ENCODE measurements at regions of chr14 and their contacts with region 1.

Region 1: GRCh38 chr14:34043627-34044372 is 92.9 kb upstream of the EGLN3 start:
- DNase-seq: peak; percentile 99
- ATAC-seq: peak; percentile 90
- H3K4me3 ChIP-seq: no peak overlapping the region
- H3K27ac ChIP-seq: peak overlapping the region; percentile 62
- H3K4me1 ChIP-seq: peaks cover 75% of the 10 kb centered on the region
- H3K27me3 ChIP-seq: no peaks in the 10 kb centered on the region
- CTCF ChIP-seq: peak; percentile 38; the same call in 1 of the 2 replicates
- EP300 ChIP-seq: peak in 1 of 2 experiments; percentile 98; a peak in 3 of 4 replicates
- POLR2A ChIP-seq: peak in 1 of 2 experiments; percentile 73; a peak in 1 of 4 replicates
- RAD21 ChIP-seq: no peak

Region 2: GRCh38 chr14:33457021-33457420 is 586.8 kb before region 1 on chr14:
- CTCF ChIA-PET with region 1: no interaction called
- POLR2A ChIA-PET with region 1: no interaction called
- in situ Hi-C with region 1: no loop called
- intact Hi-C with region 1: no loop called
- DNase-seq: no peak
- ATAC-seq: no peak
- H3K4me3 ChIP-seq: no peak overlapping the region
- H3K27ac ChIP-seq: no peak overlapping the region
- H3K4me1 ChIP-seq: no peaks in the 10 kb centered on the region
- H3K27me3 ChIP-seq: peaks cover 0 to 2% of the 10 kb centered on the region in 2 experiments; a peak in 1 of 5 replicates
- CTCF ChIP-seq: no peak
- EP300 ChIP-seq: no peak
- POLR2A ChIP-seq: no peak
- RAD21 ChIP-seq: no peak

Region 3: DNA sequence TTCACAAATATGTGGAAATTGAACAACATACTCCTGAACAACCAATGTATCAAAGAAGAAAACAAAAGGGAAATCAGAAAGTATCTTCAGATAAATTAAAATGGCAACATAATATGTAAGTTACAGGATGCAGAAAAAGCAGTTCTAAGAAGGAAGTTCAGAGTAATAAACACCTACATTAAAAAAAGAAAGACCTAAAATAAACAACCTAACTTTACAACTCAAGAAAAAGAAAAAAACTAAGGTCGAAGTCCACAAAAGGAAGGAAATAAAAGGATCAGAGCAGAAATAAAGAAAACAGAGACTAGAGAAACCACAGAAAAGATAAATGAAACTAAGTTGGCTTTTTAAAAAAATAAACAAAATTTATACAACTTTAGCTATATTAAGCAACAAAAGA is 152.1 kb before region 1 on chr14:
- CTCF ChIA-PET with region 1: no interaction called
- POLR2A ChIA-PET with region 1: no interaction called
- in situ Hi-C with region 1: no loop called
- intact Hi-C with region 1: no loop called
- DNase-seq: no peak
- ATAC-seq: no peak
- H3K4me3 ChIP-seq: no peak overlapping the region
- H3K27ac ChIP-seq: no peak overlapping the region
- H3K4me1 ChIP-seq: no peaks in the 10 kb centered on the region
- H3K27me3 ChIP-seq: no peaks in the 10 kb centered on the region
- CTCF ChIP-seq: no peak
- EP300 ChIP-seq: no peak
- POLR2A ChIP-seq: no peak
- RAD21 ChIP-seq: no peak

Region 4: GRCh38 chr14:34059855-34060638 is 16.2 kb after region 1 on chr14:
- CTCF ChIA-PET with region 1: no interaction called
- POLR2A ChIA-PET with region 1: interaction called, 13 read pairs
- in situ Hi-C with region 1: no loop called
- intact Hi-C with region 1: no loop called
- DNase-seq: peak; percentile 56
- ATAC-seq: peak; percentile 96
- H3K4me3 ChIP-seq: peak overlapping the region; percentile 28 to 66 (median 41); a peak in 5 of 6 replicates
- H3K27ac ChIP-seq: peak overlapping the region; percentile 26
- H3K4me1 ChIP-seq: peaks cover 71% of the 10 kb centered on the region
- H3K27me3 ChIP-seq: no peaks in the 10 kb centered on the region; a peak in 2 of 5 replicates
- CTCF ChIP-seq: peak; percentile 75
- EP300 ChIP-seq: peak; percentile 22 to 64; a peak in 2 of 4 replicates
- POLR2A ChIP-seq: peak in 1 of 2 experiments; percentile 67; a peak in 2 of 4 replicates
- RAD21 ChIP-seq: peak; percentile 77

Region 5: DNA sequence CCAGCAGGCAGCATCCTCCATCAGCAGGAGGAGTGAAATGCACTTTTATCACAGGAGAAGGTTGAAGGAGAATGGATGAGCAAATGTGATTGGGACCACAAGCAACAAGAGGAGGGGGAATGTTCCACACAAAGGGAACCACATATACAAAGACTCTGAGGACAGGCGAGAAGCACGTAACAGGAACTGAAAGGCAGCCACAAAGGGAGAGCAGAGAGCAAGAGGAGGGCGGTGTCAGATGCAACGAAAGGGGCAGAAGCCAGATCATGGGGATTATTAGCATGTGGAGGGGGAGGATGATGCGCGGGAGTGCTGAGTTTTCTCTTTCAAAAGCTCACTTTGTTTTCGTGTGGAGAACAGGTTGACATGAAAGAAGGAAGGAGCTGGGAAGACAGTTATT is 177.1 kb after region 1 on chr14:
- CTCF ChIA-PET with region 1: no interaction called
- POLR2A ChIA-PET with region 1: no interaction called
- in situ Hi-C with region 1: no loop called
- intact Hi-C with region 1: no loop called
- DNase-seq: no peak
- ATAC-seq: no peak
- H3K4me3 ChIP-seq: no peak overlapping the region
- H3K27ac ChIP-seq: no peak overlapping the region
- H3K4me1 ChIP-seq: peaks cover 11% of the 10 kb centered on the region
- H3K27me3 ChIP-seq: no peaks in the 10 kb centered on the region; a peak in 1 of 5 replicates
- CTCF ChIP-seq: no peak
- EP300 ChIP-seq: no peak
- POLR2A ChIP-seq: no peak
- RAD21 ChIP-seq: no peak